B cell (primary cell): ENCODE measurements at regions of chr2 and their contacts with region 1.

Region 1: DNA sequence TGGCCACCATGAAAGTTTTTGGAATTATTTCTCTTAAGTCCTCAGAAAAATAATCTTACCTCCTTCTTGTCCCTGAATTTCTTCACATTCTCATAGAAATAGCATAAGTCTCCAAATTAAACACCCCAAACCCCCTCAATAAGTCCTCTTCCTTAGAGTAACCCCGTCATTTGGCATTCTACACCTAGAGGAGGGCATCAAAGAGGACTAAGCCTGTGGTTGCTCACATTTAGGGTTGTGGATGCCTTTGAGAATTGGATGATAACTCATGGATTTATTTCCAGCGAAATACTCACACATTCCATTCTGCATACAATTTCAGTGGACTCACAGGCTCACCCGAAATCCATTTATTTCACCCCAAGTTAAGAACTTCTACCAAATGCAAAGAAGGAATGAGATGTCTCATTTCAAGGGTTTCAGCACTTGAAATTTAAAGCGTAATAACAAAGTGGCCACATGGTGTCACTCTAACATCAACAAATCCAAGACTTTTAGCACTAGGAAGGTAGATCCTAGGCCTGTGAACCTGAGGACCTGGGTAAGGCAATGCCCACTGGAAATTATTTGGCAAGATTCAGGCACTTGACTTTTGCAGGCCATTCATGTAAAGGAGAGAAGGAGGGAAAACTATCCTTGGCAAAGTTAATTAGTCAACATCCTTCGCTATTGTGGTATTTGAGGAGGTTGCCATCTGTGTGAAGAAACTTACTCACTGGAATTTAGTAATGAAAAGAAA is 24.6 kb downstream of the DYTN start:
- DNase-seq: peak; percentile 70
- ATAC-seq: peak; percentile 36
- H3K4me3 ChIP-seq: no peak overlapping the region
- H3K4me3 Mint-ChIP-seq: no peak overlapping the region
- H3K27ac ChIP-seq: no peak overlapping the region
- H3K27ac Mint-ChIP-seq: no peak overlapping the region
- H3K4me1 ChIP-seq: no peaks in the 10 kb centered on the region
- H3K4me1 Mint-ChIP-seq: no peaks in the 10 kb centered on the region
- H3K27me3 ChIP-seq: no peaks in the 10 kb centered on the region
- H3K27me3 Mint-ChIP-seq: peaks cover 17% of the 10 kb centered on the region
- CTCF ChIP-seq: peak; percentile 80

Region 2: DNA sequence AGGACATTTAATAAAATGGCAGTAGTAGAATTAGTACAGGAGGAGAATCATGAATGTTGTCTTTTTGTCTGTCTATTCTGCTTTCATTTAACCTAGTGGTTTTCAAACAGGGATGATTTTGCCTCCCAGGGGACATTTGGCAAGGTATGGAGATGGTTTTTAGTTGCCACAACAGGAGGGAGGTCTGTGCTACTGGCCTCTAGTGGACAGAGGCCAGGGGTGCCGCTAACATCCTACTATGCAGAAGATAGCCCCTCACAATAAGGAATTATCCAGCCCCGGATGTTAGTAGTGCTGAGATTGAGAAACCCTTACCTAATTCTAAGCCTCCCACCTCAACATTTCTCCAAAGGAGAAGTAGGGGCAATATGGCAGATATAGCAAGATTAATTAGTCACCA is 90.2 kb after region 1 on chr2:
- CTCF ChIA-PET with region 1: interaction called, 22 read pairs
- POLR2A ChIA-PET with region 1: no interaction called
- intact Hi-C with region 1: loop called (anchors 1 kb)
- DNase-seq: no peak
- ATAC-seq: no peak
- H3K4me3 ChIP-seq: no peak overlapping the region
- H3K4me3 Mint-ChIP-seq: no peak overlapping the region
- H3K27ac ChIP-seq: no peak overlapping the region
- H3K27ac Mint-ChIP-seq: no peak overlapping the region
- H3K4me1 ChIP-seq: no peaks in the 10 kb centered on the region
- H3K4me1 Mint-ChIP-seq: no peaks in the 10 kb centered on the region
- H3K27me3 ChIP-seq: no peaks in the 10 kb centered on the region
- H3K27me3 Mint-ChIP-seq: no peaks in the 10 kb centered on the region
- CTCF ChIP-seq: peak; percentile 11

Region 3: GRCh38 chr2:206989306-206989705 is 295.7 kb after region 1 on chr2:
- CTCF ChIA-PET with region 1: interaction called, 4 read pairs
- POLR2A ChIA-PET with region 1: no interaction called
- intact Hi-C with region 1: loop called (anchors 5 kb)
- DNase-seq: peak; percentile 39
- ATAC-seq: peak; percentile 76
- H3K4me3 ChIP-seq: no peak overlapping the region
- H3K4me3 Mint-ChIP-seq: no peak overlapping the region
- H3K27ac ChIP-seq: no peak overlapping the region
- H3K27ac Mint-ChIP-seq: no peak overlapping the region
- H3K4me1 ChIP-seq: peaks cover 3 to 4% of the 10 kb centered on the region in 2 donors
- H3K4me1 Mint-ChIP-seq: peaks cover 3% of the 10 kb centered on the region
- H3K27me3 ChIP-seq: peaks cover 0 to 4% (median 0%) of the 10 kb centered on the region in 4 experiments
- H3K27me3 Mint-ChIP-seq: peaks cover 33% of the 10 kb centered on the region
- CTCF ChIP-seq: peak; percentile 69

Region 4: GRCh38 chr2:208072250-208072892 is 1378.8 kb after region 1 on chr2:
- CTCF ChIA-PET with region 1: interaction called, 8 read pairs
- POLR2A ChIA-PET with region 1: no interaction called
- intact Hi-C with region 1: loop called (anchors 1 kb)
- DNase-seq: peak; percentile 72
- ATAC-seq: peak; percentile 69
- H3K4me3 ChIP-seq: no peak overlapping the region
- H3K4me3 Mint-ChIP-seq: no peak overlapping the region
- H3K27ac ChIP-seq: no peak overlapping the region
- H3K27ac Mint-ChIP-seq: no peak overlapping the region
- H3K4me1 ChIP-seq: no peaks in the 10 kb centered on the region
- H3K4me1 Mint-ChIP-seq: no peaks in the 10 kb centered on the region
- H3K27me3 ChIP-seq: peaks cover 0 to 4% (median 0%) of the 10 kb centered on the region in 4 experiments
- H3K27me3 Mint-ChIP-seq: peaks cover 19% of the 10 kb centered on the region
- CTCF ChIP-seq: peak; percentile 89